ENCODE measurements at regions of chr11 and their contacts with region 1.

Region 1: GRCh38 chr11:66371627-66372415 is at the start of gene SLC29A2:
- DNase-seq: peak; percentile 98 to 99
- H3K4me3 ChIP-seq: peak within 1 kb of the TSS; percentile 95
- H3K4me3 Mint-ChIP-seq: peak within 1 kb of the TSS; percentile 69
- H3K27ac Mint-ChIP-seq: peak within 1 kb of the TSS; percentile 76
- H3K4me1 ChIP-seq: peaks cover 15% of the 10 kb centered on the region
- H3K4me1 Mint-ChIP-seq: peaks cover 9% of the 10 kb centered on the region
- H3K27me3 ChIP-seq: no peaks in the 10 kb centered on the region
- H3K27me3 Mint-ChIP-seq: no peaks in the 10 kb centered on the region
- CTCF ChIP-seq: peak in 1 of 2 experiments; percentile 3
- total RNA-seq, gene SLC29A2: 30.3 and 32.0 TPM in 2 replicates

Region 2: DNA sequence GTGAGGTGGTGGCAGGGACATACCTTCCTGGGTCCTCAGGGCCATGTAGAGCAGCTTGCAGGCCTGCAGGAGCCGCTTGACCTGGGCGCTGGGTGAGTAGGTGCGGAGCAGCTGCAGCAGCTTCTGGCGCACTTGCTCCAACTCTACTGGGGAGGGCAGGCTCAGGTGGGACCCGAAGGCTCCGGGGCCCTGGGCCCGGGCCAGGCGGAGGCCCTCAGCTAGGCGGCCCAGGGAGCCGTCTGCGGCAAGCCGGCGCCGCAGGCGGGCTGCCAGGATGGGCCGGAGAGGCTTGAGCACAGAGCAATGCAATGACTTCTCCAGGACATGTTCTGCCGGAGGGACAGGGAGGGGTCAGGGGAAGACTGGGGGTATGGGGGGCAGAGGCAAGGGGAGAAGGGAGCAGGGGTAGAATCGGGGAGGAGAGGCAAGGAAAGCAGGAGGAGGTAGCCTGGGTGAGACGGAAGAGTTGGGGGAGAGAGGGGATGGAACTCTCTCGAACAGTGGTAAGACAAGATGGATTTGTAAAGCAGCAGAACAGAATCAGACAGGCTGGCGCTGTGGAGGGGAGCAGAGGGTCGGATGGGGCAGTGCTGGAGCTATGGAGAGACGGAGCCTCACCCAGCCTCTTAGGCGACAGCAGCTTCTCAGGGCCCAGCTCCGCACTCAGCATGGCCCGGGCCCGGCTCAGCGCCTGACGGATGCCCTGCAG is 37.8 kb before region 1 on chr11:
- CTCF ChIA-PET with region 1: no interaction called
- POLR2A ChIA-PET with region 1: no interaction called
- intact Hi-C with region 1: no loop called
- DNase-seq: no peak
- H3K4me3 ChIP-seq: no peak overlapping the region
- H3K4me3 Mint-ChIP-seq: peak overlapping the region; percentile 42
- H3K27ac Mint-ChIP-seq: no peak overlapping the region
- H3K4me1 ChIP-seq: peaks cover 10% of the 10 kb centered on the region
- H3K4me1 Mint-ChIP-seq: peaks cover 7% of the 10 kb centered on the region
- H3K27me3 ChIP-seq: no peaks in the 10 kb centered on the region
- H3K27me3 Mint-ChIP-seq: no peaks in the 10 kb centered on the region
- CTCF ChIP-seq: no peak

Region 3: GRCh38 chr11:66344550-66345315 is 27.1 kb before region 1 on chr11 and contains the start of gene BRMS1:
- CTCF ChIA-PET with region 1: no interaction called
- POLR2A ChIA-PET with region 1: interaction called, 6 read pairs
- intact Hi-C with region 1: loop called (anchors 1 kb)
- DNase-seq: peak; percentile 97 to 98
- H3K4me3 ChIP-seq: peak within 1 kb of the TSS; percentile 99
- H3K4me3 Mint-ChIP-seq: peak within 1 kb of the TSS; percentile 86
- H3K27ac Mint-ChIP-seq: peak within 1 kb of the TSS; percentile 99
- H3K4me1 ChIP-seq: peaks cover 22% of the 10 kb centered on the region
- H3K4me1 Mint-ChIP-seq: peaks cover 34% of the 10 kb centered on the region
- H3K27me3 ChIP-seq: no peaks in the 10 kb centered on the region
- H3K27me3 Mint-ChIP-seq: peaks cover 4% of the 10 kb centered on the region
- CTCF ChIP-seq: peak in 1 of 2 experiments; percentile 19
- total RNA-seq, gene BRMS1: 58.1 and 58.2 TPM in 2 replicates

Region 4: DNA sequence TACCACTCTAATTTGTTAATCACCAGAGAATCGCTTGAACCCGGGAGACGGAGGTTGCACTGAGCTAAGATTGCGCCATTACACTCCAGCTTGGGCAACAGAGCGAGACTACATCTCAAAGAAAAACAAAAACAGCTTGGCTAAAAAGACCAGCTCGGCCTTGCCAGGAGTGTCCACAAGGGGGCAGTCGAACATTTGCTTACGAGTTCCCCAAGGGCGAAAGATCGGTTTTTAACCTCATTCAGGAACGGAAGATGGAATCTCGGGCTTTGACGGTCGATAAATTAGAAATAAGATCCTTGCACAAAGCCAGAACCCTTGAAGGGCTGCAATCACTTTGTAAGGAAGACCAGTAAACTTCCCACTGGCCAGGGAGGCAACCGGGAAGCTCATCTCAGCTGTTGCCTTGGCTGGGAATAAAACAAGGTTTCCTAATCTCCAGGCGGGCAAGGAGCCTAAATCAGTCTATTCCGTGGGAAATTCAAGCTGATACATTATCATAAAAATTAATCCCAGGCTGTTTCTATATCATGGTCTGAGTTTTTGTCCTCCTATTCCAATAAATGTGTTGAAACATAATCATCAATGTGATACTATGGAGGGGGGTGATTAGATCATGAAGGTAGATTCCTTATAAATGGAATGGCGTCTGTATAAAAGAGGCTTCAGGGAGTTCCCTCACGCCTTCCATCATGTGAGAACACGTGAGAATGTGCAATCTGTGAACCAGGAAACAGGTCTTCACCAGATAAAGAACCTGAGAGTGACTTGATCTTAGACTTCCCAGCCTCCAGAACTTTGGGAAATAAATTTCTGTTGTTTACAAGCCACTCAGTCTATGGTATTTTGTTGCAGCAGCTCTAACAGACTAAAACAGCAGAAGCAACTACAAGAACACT is 14.6 kb after region 1 on chr11:
- CTCF ChIA-PET with region 1: interaction called, 13 read pairs
- POLR2A ChIA-PET with region 1: interaction called, 3 read pairs
- intact Hi-C with region 1: no loop called
- DNase-seq: peak; percentile 85 to 86
- H3K4me3 ChIP-seq: no peak overlapping the region
- H3K4me3 Mint-ChIP-seq: peak overlapping the region; percentile 61
- H3K27ac Mint-ChIP-seq: no peak overlapping the region
- H3K4me1 ChIP-seq: no peaks in the 10 kb centered on the region
- H3K4me1 Mint-ChIP-seq: no peaks in the 10 kb centered on the region
- H3K27me3 ChIP-seq: no peaks in the 10 kb centered on the region
- H3K27me3 Mint-ChIP-seq: peaks cover 5% of the 10 kb centered on the region
- CTCF ChIP-seq: peak; percentile 86 to 94